Breast epithelium (tissue), 4 donors: ENCODE measurements at regions of chr5 and their contacts with region 1.

Region 1: GRCh38 chr5:170225326-170226128 is 7.3 kb upstream of the C5orf58 start:
- DNase-seq: peak; percentile 67 to 74
- H3K4me3 ChIP-seq: no peak overlapping the region
- H3K27ac ChIP-seq: peak overlapping the region in 1 of 2 donors; percentile 2
- H3K4me1 ChIP-seq: no peaks in the 10 kb centered on the region
- H3K27me3 ChIP-seq: no peaks in the 10 kb centered on the region
- CTCF ChIP-seq: peak; percentile 62 to 85 (median 77)
- POLR2A ChIP-seq: no peak

Region 2: DNA sequence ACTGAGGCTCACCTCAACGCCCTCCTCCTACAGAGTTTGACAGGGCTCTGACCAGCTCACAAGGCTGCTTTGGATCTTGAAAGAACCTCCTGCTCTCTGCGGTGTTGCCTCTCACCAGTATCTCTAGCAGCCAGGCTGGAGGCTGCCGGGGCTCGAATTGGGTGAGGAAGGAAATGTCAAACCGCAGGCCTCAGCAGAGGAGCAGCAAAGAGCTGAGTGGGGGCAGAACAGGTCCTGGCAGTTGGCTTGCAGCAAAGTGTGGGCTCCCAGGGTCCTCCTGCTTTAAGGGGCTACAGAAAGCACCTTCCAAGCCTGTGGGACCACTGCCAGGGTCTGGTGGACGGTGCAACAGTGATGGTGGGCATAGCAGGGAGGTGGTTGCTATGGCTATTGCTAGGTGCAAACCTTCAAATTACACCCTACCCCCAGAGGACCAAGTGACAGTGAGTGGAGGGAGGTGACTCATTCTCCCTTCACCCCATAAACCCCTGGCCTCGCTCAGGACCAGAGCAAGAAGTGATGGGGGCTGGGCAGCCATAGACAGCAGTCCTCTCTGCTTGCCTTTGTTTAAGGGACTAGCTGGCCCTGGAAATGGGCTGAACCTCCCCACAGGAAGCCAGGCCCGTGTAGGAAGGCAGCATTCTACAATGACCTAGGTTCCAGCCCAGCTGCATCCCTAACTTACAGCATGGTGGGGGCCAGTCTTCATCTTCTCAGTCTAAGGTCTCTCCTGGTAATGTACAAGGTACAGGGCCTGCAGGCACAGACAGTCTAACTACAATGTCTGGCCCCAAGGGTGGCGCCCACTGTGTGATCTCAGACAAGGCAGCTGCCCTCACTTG is 53.3 kb after region 1 on chr5:
- intact Hi-C with region 1: no loop called
- DNase-seq: peak in 1 of 2 donors; percentile 44
- H3K4me3 ChIP-seq: no peak overlapping the region
- H3K27ac ChIP-seq: peak overlapping the region; percentile 23 to 50
- H3K4me1 ChIP-seq: no peaks in the 10 kb centered on the region
- H3K27me3 ChIP-seq: no peaks in the 10 kb centered on the region
- CTCF ChIP-seq: no peak
- POLR2A ChIP-seq: no peak

Region 3: GRCh38 chr5:170411100-170411499 is 185.6 kb after region 1 on chr5:
- intact Hi-C with region 1: loop called (anchors 10 kb)
- DNase-seq: no peak
- H3K4me3 ChIP-seq: no peak overlapping the region
- H3K27ac ChIP-seq: no peak overlapping the region
- H3K4me1 ChIP-seq: no peaks in the 10 kb centered on the region
- H3K27me3 ChIP-seq: no peaks in the 10 kb centered on the region
- CTCF ChIP-seq: no peak
- POLR2A ChIP-seq: no peak

Region 4: GRCh38 chr5:170920196-170920595 is 694.7 kb after region 1 on chr5:
- intact Hi-C with region 1: no loop called
- DNase-seq: no peak
- H3K4me3 ChIP-seq: no peak overlapping the region
- H3K27ac ChIP-seq: no peak overlapping the region
- H3K4me1 ChIP-seq: no peaks in the 10 kb centered on the region
- H3K27me3 ChIP-seq: no peaks in the 10 kb centered on the region
- CTCF ChIP-seq: no peak
- POLR2A ChIP-seq: no peak